Aorta (tissue), 5 donors: ENCODE measurements at regions of chr13 and their contacts with region 1.

Region 1: DNA sequence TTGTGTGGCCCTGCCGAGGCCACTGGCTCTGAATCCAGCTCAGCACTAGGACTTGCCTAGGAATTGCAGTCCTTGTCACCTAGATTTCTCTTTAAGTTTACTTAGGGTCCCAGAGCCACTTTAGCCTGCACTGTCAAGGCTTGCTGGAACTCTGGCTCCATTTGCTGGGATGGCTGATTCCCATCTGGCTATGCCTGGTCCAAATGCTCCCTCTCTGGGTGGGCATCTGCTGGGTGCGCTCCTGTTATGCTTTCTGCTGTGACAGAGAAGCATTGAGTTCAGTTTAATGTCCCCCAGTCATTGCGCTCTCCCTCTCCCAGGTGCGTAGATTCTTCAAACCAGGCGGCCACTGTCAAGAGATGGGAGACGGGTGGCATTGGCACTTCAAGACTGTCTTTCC is 102.2 kb downstream of the MTUS2 start:
- DNase-seq: no peak
- ATAC-seq: no peak
- H3K4me3 ChIP-seq: no peak overlapping the region
- H3K27ac ChIP-seq: no peak overlapping the region
- H3K4me1 ChIP-seq: no peaks in the 10 kb centered on the region
- H3K27me3 ChIP-seq: no peaks in the 10 kb centered on the region

Region 2: GRCh38 chr13:28958018-28958417 is 35.7 kb after region 1 on chr13:
- intact Hi-C with region 1: loop called in 1 of 2 experiments (anchors 2 kb)
- DNase-seq: no peak
- ATAC-seq: no peak
- H3K4me3 ChIP-seq: no peak overlapping the region
- H3K27ac ChIP-seq: no peak overlapping the region
- H3K4me1 ChIP-seq: peaks cover 0 to 2% of the 10 kb centered on the region in 2 donors
- H3K27me3 ChIP-seq: no peaks in the 10 kb centered on the region